Dorsolateral prefrontal cortex (tissue), 120 donors: ENCODE measurements at regions of chr2 and their contacts with region 1.

Region 1: DNA sequence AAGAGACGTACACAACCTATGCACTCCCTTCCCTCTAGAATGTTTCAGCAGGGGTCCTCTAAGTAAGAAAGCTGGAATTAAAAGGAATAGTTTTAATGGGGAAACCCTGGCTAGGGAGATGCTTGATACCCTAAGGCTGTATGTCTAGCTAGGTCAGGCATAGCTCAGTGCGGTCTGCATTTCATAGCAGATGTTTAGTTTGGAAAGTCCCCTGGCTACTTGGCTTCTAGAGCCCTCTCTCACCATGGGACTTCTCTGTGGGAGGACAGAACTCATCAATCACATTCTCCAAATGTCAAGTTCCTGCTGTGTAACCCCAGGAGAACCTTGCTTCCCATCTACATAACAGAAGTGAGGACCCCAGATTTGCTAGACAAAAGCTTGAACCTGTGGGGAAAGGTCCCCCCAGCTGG is 24.1 kb upstream of the ANXA4 start:
- DNase-seq: no peak
- H3K4me3 ChIP-seq: no peak overlapping the region
- H3K27ac ChIP-seq: peak overlapping the region in 1 of 59 donors; percentile 1
- H3K27me3 ChIP-seq: no peaks in the 10 kb centered on the region
- CTCF ChIP-seq: no peak

Region 2: GRCh38 chr2:69565431-69565839 is 152.4 kb before region 1 on chr2:
- intact Hi-C with region 1: loop called in 1 of 2 experiments (anchors 10 kb)
- DNase-seq: peak in 9 of 10 donors; percentile 31 to 72 (median 57)
- H3K4me3 ChIP-seq: no peak overlapping the region
- H3K27ac ChIP-seq: peak overlapping the region in 1 of 59 donors; percentile 10
- H3K27me3 ChIP-seq: no peaks in the 10 kb centered on the region
- CTCF ChIP-seq: peak; percentile 49 to 87 (median 76)